B cell (primary cell): ENCODE measurements at regions of chr1 and their contacts with region 1.

Region 1: DNA sequence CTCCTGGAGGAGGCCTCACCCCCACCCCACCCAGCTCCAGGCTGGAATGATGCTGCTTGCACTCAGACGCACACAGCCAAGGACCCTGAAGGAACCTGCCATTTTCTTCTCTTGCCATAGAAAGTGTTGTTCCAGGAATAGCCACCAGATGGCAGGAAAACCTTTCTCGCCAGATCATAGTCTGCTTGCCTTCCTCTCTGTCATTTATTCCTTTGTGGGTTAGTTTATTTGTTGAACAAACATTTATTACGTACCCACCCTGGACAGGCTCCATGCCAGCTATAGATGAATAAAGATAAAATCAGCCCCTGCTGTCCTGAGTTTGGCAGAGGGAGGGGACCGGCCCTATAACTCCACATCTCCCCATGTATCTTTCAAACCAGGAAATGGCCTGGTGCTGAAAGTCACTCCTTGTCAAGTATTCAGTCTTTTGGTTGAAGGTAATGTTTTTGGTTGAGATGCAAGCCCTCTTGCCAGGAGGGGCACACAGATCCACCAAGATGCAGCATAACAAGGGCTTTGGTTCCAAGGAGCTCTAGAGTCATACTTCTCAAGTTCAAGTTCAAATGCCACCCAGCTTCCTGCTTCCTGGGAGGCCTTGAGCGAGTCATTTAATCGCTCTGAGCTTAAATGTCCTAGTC is 7.0 kb upstream of the KCNC4 start:
- DNase-seq: peak; percentile 84
- ATAC-seq: peak; percentile 71
- H3K4me3 ChIP-seq: no peak overlapping the region
- H3K4me3 Mint-ChIP-seq: no peak overlapping the region
- H3K27ac ChIP-seq: no peak overlapping the region
- H3K27ac Mint-ChIP-seq: no peak overlapping the region
- H3K4me1 ChIP-seq: peaks cover 3 to 7% of the 10 kb centered on the region in 2 donors
- H3K4me1 Mint-ChIP-seq: peaks cover 11% of the 10 kb centered on the region
- H3K27me3 ChIP-seq: no peaks in the 10 kb centered on the region
- H3K27me3 Mint-ChIP-seq: no peaks in the 10 kb centered on the region
- CTCF ChIP-seq: peak; percentile 91

Region 2: DNA sequence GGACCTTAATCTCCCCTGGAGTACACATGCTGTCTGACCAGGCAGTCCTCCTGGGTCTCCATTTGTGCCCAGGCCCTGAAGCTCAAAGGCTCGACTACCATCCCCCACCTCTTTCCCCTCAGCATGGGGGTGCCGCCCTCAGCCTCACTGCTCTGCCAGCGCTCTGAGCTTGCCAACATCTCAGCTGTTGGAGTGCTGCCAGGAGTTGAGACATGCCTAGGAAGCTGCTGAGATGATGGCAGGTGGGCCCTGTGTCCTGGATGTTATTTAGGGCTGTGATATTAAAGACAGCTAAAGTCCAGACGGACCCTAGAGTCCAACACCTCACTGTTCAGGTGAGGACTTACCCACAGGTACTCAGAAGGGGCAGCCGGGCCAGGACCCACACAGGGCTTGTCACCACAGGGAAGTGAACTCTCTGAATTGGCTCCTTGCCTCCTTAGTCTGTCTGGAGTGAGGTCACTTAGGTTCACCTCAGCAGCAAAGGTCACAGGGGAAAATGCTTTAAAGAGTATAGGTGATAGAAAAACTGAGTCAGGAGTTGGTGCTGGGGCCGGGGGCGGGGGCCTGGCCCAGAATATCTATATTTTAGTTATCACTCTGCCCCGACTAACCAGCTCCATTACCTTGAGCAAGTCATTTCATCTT is 12.7 kb before region 1 on chr1:
- CTCF ChIA-PET with region 1: interaction called, 51 read pairs
- POLR2A ChIA-PET with region 1: no interaction called
- intact Hi-C with region 1: no loop called
- DNase-seq: no peak
- ATAC-seq: no peak
- H3K4me3 ChIP-seq: no peak overlapping the region
- H3K4me3 Mint-ChIP-seq: no peak overlapping the region
- H3K27ac ChIP-seq: no peak overlapping the region
- H3K27ac Mint-ChIP-seq: no peak overlapping the region
- H3K4me1 ChIP-seq: no peaks in the 10 kb centered on the region
- H3K4me1 Mint-ChIP-seq: no peaks in the 10 kb centered on the region
- H3K27me3 ChIP-seq: peaks cover 0 to 8% (median 2%) of the 10 kb centered on the region in 4 experiments
- H3K27me3 Mint-ChIP-seq: peaks cover 40% of the 10 kb centered on the region
- CTCF ChIP-seq: no peak

Region 3: DNA sequence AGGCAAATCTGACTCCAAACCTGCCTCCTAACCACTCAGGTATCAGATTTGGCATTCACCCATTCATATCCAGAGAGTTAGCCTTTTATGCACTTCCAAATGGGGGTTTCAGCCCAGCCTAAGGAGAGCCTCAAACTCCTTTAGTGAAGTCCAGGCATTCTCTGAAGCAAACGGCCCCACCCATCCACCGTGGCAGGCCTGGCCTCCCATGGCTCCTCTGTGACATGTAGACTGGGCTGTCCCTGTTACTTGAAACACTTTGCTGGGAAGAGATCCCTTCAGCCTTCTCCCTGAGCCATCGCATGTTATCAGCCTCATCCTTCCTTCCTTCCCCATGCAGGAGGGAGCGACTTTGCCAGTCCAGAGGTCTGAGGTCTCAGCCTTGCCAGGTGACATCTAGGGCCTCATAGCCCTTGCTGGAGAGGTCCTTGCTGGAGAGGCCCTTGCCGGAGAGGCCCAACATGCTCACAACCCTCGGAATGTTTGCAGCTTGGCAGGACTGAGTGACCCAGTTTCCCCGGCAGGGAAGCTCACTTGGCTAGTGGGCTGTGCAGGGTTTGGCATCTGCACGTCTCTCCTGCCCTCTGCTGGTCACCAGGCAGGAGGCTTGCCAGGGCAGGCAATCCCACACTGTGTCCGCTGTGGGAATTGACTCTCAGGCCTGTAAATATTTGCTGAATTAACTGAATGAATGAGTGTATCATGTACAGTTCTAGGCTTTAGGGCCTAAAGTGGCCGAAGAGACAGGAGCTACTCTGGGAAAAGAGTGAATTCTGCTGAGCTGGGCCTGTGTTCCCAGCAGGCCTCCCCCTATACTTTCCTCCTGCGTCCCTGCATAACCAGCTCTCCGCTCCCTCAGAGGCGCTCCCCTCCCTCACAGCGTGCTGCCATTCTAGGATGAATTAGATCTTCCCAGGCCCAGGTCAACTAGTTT is 109.3 kb after region 1 on chr1:
- CTCF ChIA-PET with region 1: interaction called, 838 read pairs
- POLR2A ChIA-PET with region 1: interaction called, 9 read pairs
- intact Hi-C with region 1: loop called (anchors 1 kb)
- DNase-seq: peak; percentile 81
- ATAC-seq: peak; percentile 95
- H3K4me3 ChIP-seq: no peak overlapping the region
- H3K4me3 Mint-ChIP-seq: no peak overlapping the region
- H3K27ac ChIP-seq: no peak overlapping the region
- H3K27ac Mint-ChIP-seq: no peak overlapping the region
- H3K4me1 ChIP-seq: peaks cover 0 to 4% of the 10 kb centered on the region in 2 donors
- H3K4me1 Mint-ChIP-seq: no peaks in the 10 kb centered on the region
- H3K27me3 ChIP-seq: no peaks in the 10 kb centered on the region
- H3K27me3 Mint-ChIP-seq: no peaks in the 10 kb centered on the region
- CTCF ChIP-seq: peak; percentile 89